Calu3 (cell line): ENCODE measurements at regions of chr12 and their contacts with region 1.

Region 1: GRCh38 chr12:27243804-27244683 is at the start of gene STK38L:
- DNase-seq: peak; percentile 99
- H3K4me3 Mint-ChIP-seq: peak within 1 kb of the TSS; percentile 95
- H3K27ac Mint-ChIP-seq: peak within 1 kb of the TSS; percentile 84
- H3K4me1 Mint-ChIP-seq: peaks cover 16% of the 10 kb centered on the region
- H3K27me3 Mint-ChIP-seq: no peaks in the 10 kb centered on the region
- CTCF ChIP-seq: no peak
- total RNA-seq, gene STK38L: 24.6 and 30.3 TPM in 2 replicates

Region 2: GRCh38 chr12:27305673-27306456 is 61.8 kb after region 1 on chr12:
- CTCF ChIA-PET with region 1: interaction called, 9 read pairs
- intact Hi-C with region 1: loop called (anchors 2 kb)
- DNase-seq: no peak
- H3K4me3 Mint-ChIP-seq: no peak overlapping the region
- H3K27ac Mint-ChIP-seq: no peak overlapping the region
- H3K4me1 Mint-ChIP-seq: peaks cover 9% of the 10 kb centered on the region
- H3K27me3 Mint-ChIP-seq: no peaks in the 10 kb centered on the region
- CTCF ChIP-seq: peak; percentile 35

Region 3: DNA sequence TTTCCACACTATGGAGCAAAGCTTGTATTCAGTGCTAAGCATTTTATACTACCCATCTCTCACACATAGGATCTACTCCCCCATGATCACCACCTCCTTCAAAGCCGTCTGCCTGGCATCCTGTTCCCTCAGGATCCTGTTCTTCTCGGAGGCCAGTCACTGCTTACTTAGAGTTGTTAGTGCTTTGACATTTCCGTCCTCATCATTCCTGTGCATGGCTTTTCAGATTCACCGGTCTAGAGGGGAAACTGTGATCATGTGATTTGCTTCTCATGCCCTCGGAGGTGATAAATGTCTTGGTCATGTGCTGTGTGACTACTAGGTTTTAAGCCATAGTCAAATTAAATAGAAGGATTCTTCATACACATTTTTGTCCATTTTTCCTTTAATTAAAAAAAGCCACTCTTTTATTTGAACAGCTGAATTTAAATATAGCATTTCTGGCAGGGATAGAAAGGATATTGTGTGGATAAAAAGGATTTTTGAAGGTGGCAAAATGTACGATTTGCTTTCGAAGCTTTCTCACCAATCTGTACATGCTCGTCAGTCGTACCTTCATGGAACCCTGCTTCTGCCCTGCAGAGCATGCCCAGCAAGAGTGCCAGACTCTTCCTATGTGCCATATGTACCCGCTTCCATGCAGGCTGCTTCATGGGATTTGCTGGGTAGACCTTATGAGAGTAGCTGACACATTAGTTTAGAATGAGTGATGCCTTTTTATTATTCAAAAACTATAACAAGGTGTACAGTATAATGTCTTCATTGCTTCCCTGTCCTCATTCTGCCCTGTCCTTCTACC is 141.9 kb after region 1 on chr12:
- CTCF ChIA-PET with region 1: no interaction called
- intact Hi-C with region 1: no loop called
- DNase-seq: no peak
- H3K4me3 Mint-ChIP-seq: no peak overlapping the region
- H3K27ac Mint-ChIP-seq: no peak overlapping the region
- H3K4me1 Mint-ChIP-seq: peaks cover 22% of the 10 kb centered on the region
- H3K27me3 Mint-ChIP-seq: no peaks in the 10 kb centered on the region
- CTCF ChIP-seq: no peak